ENCODE measurements at regions of chr2 and their contacts with region 1.

Region 1: DNA sequence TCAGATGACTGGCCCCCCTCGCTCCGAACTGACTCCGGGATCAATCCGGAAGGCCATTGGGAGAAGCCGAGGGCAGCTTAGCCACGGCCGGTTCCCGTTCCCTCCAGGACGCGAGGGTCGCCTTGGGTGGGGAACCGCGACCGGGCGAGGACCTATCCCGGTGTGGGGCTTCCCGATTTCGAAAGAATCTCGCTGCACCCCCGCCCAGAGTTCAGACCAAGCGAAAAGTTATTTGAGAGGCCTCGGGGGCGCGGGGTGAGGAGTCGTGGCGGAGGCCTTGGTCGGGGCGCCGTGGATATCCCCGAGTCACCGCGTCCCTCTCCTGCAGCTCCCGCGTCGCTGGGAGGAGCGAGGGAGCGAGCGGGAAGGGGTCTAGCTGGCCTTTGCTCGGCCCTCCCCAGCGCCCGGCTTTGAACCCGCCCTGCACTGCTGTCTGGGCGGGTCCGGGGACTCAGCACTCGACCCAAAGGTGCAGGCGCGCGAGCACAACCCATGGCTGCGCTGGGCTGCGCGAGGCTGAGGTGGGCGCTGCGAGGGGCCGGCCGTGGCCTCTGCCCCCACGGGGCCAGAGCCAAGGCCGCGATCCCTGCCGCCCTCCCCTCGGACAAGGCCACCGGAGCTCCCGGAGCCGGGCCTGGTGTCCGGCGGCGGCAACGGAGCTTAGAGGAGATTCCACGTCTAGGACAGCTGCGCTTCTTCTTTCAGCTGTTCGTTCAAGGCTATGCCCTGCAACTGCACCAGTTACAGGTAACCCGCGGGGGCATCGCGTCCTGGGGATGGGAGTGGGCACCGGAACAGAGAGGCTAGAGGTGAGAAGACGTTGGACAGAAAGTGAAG is at the start of gene CYP27A1:
- DNase-seq: peak; percentile 46 to 95 (median 66)

Region 2: GRCh38 chr2:218745559-218746469 is 36.1 kb before region 1 on chr2:
- intact Hi-C with region 1: loop called (anchors 5 kb)
- DNase-seq: peak; percentile 79 to 98 (median 88)

Region 3: GRCh38 chr2:218839430-218839829 is 57.5 kb after region 1 on chr2:
- intact Hi-C with region 1: no loop called
- DNase-seq: no peak

Region 4: DNA sequence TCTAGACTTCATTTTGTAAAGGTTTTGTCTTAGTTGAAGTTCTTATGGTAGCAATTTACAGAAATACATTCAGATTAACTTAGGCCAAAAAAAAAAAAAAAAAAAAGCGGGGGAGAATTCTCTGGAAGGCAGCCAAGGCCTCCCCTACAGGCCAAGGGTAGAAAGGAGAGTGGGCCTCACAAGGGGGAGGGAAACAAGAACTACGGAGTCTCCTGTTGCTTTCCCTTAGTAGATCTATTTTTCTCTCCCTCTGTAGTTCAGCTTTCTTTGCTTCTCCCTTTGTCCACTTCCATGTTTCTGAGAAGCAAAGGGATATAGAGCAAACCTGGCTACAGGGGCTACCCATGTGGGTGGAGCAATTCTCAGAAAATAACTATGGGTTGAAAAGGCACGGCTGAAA is 813.3 kb after region 1 on chr2:
- intact Hi-C with region 1: no loop called
- DNase-seq: no peak